Vagina (tissue), 2 donors: ENCODE measurements at regions of chr2 and their contacts with region 1.

Region 1: GRCh38 chr2:96638144-96639121 is at the start of gene KANSL3:
- DNase-seq: peak in 1 of 2 donors; percentile 96
- H3K4me3 ChIP-seq: peak within 1 kb of the TSS; percentile 70 to 82
- H3K27ac ChIP-seq: peak within 1 kb of the TSS; percentile 92
- H3K4me1 ChIP-seq: peaks cover 35% of the 10 kb centered on the region
- H3K27me3 ChIP-seq: no peaks in the 10 kb centered on the region
- CTCF ChIP-seq: peak in 1 of 3 experiments; percentile 79
- POLR2A ChIP-seq: peak in 1 of 2 donors; percentile 99
- total RNA-seq, gene KANSL3: 41.7 TPM

Region 2: GRCh38 chr2:96536445-96537065 is 101.9 kb before region 1 on chr2 and contains the start of gene ARID5A:
- intact Hi-C with region 1: loop called (anchors 10 kb)
- DNase-seq: no peak
- H3K4me3 ChIP-seq: peak within 1 kb of the TSS; percentile 82 to 93
- H3K27ac ChIP-seq: peak within 1 kb of the TSS; percentile 98
- H3K4me1 ChIP-seq: peaks cover 89% of the 10 kb centered on the region
- H3K27me3 ChIP-seq: no peaks in the 10 kb centered on the region
- CTCF ChIP-seq: peak in 1 of 3 experiments; percentile 63
- POLR2A ChIP-seq: peak; percentile 97 to 99
- total RNA-seq, gene ARID5A: 34.1 TPM

Region 3: DNA sequence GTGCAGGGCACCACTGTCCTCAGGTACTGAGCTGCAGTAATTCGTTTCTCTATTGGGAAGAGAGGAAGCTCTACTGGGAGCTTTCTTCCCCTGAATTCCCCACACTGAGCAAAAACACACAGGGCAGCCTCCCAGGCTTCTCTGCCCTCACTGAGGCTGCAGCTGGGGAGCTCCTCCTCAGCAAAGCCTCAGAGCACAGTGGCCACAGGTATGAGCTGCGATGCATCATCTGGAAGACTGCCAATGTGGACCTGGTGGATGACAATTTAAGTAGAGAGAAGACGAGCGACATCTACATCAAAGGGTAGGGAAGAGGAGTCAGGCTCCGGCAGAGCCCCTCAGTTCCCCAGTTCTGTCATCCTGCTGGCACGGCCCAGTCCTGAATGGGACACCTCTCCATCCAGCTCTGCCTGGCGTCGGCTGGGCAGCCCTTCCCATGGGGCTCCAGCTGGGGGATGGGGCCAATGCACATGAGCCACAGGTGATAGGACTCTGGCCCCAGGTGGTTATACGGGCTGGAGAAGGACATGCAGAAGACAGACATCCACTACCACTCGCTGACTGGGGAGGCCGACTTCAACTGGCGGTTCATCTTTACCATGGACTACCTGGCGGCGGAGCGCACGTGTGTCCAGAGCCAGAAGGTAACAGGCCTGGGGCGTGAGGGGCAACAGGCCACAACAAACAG is 63.8 kb after region 1 on chr2:
- intact Hi-C with region 1: no loop called
- DNase-seq: no peak
- H3K4me3 ChIP-seq: no peak overlapping the region
- H3K27ac ChIP-seq: no peak overlapping the region
- H3K4me1 ChIP-seq: no peaks in the 10 kb centered on the region
- H3K27me3 ChIP-seq: no peaks in the 10 kb centered on the region
- CTCF ChIP-seq: no peak
- POLR2A ChIP-seq: no peak

Region 4: GRCh38 chr2:96739633-96740428 is 101.4 kb after region 1 on chr2 and contains the start of gene LMAN2L:
- intact Hi-C with region 1: loop called (anchors 10 kb)
- DNase-seq: peak in 1 of 2 donors; percentile 99
- H3K4me3 ChIP-seq: peak within 1 kb of the TSS; percentile 90 to 93
- H3K27ac ChIP-seq: peak within 1 kb of the TSS; percentile 82
- H3K4me1 ChIP-seq: peaks cover 19% of the 10 kb centered on the region
- H3K27me3 ChIP-seq: no peaks in the 10 kb centered on the region
- CTCF ChIP-seq: no peak
- POLR2A ChIP-seq: no peak
- total RNA-seq, gene LMAN2L: 13.0 TPM

Region 5: GRCh38 chr2:96760036-96760985 is 121.9 kb after region 1 on chr2 and contains the start of gene CNNM4:
- intact Hi-C with region 1: loop called (anchors 10 kb)
- DNase-seq: peak in 1 of 2 donors; percentile 96
- H3K4me3 ChIP-seq: peak within 1 kb of the TSS; percentile 67 to 95
- H3K27ac ChIP-seq: peak within 1 kb of the TSS; percentile 79
- H3K4me1 ChIP-seq: peaks cover 55% of the 10 kb centered on the region
- H3K27me3 ChIP-seq: no peaks in the 10 kb centered on the region
- CTCF ChIP-seq: no peak
- POLR2A ChIP-seq: peak in 1 of 2 donors; percentile 79
- total RNA-seq, gene CNNM4: 8.3 TPM

Region 6: GRCh38 chr2:96800061-96801004 is 161.9 kb after region 1 on chr2:
- intact Hi-C with region 1: no loop called
- DNase-seq: no peak
- H3K4me3 ChIP-seq: no peak overlapping the region
- H3K27ac ChIP-seq: no peak overlapping the region
- H3K4me1 ChIP-seq: peaks cover 8% of the 10 kb centered on the region
- H3K27me3 ChIP-seq: no peaks in the 10 kb centered on the region
- CTCF ChIP-seq: no peak
- POLR2A ChIP-seq: no peak

Region 7: GRCh38 chr2:96856776-96857673 is 218.6 kb after region 1 on chr2:
- intact Hi-C with region 1: loop called (anchors 10 kb)
- DNase-seq: no peak
- H3K4me3 ChIP-seq: peak overlapping the region; percentile 63 to 87
- H3K27ac ChIP-seq: peak overlapping the region; percentile 79
- H3K4me1 ChIP-seq: peaks cover 49% of the 10 kb centered on the region
- H3K27me3 ChIP-seq: no peaks in the 10 kb centered on the region
- CTCF ChIP-seq: no peak
- POLR2A ChIP-seq: no peak